Naive thymus-derived CD8-positive, alpha-beta T cell (primary cell): ENCODE measurements at regions of chr12 and their contacts with region 1.

Region 1: GRCh38 chr12:53391729-53392128 is 11.8 kb downstream of the SP1 start:
- DNase-seq: no peak
- ATAC-seq: no peak
- H3K4me3 Mint-ChIP-seq: peak overlapping the region in 8 of 10 donors; percentile 11 to 65 (median 36)
- H3K27ac Mint-ChIP-seq: peak overlapping the region in 6 of 10 donors; percentile 14 to 82 (median 19)
- H3K4me1 Mint-ChIP-seq: peaks cover 17 to 55% (median 48%) of the 10 kb centered on the region in 4 donors
- H3K27me3 Mint-ChIP-seq: no peaks in the 10 kb centered on the region

Region 2: DNA sequence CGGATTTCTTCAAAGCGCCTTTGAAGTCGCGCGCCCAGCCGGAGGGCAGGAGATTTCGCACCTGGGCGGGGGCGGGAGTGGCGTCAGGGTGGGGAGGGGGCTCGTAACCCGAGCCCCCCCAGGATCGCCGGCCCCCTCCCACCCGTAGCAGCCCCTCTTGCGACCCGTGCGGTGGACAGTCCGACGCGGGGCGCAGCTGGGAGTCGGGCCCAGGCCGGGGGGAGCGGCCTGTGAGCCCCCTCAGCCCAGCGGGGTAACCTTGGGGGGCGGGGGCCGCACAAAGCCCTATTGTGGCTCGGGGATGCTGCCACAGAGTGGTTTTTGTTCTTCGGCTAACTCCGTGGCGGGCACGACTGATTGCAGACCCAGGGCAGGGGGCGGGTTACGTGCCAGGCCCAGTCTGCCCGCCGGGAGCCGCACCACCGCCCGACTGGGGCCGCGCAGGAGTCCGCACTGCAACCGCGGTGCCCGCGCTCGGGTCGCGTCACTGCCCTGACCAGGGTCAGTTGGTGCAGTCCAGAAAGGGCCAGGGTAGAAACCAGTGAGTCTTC is 66.1 kb before region 1 on chr12:
- POLR2A ChIA-PET with region 1: no interaction called
- DNase-seq: peak in 4 of 10 donors; percentile 15 to 33 (median 26)
- ATAC-seq: no peak
- H3K4me3 Mint-ChIP-seq: peak overlapping the region; percentile 80 to 99 (median 87)
- H3K27ac Mint-ChIP-seq: peak overlapping the region in 5 of 10 donors; percentile 56 to 96 (median 66)
- H3K4me1 Mint-ChIP-seq: peaks cover 27 to 39% (median 32%) of the 10 kb centered on the region in 4 donors
- H3K27me3 Mint-ChIP-seq: peaks cover 0 to 2% (median 0%) of the 10 kb centered on the region in 5 donors

Region 3: DNA sequence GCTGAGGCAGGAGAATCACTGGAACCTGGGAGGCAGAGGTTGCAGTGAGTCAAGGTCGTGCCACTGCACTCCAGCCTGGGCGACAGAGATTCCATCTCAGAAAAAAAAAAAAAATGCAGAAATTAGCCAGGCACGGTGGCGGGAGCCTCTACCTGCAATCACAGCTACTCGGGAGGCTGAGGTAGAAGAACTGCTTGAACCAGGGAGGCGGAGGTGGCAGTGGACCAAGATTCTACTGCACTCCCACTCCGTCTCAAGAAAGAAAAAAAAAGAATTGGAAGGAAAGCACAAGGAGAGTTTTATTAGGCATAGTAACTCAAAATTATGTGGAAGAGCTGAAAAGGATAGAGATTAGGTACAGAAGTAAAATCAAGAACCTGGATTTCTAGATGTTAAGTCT is 11.1 kb after region 1 on chr12:
- POLR2A ChIA-PET with region 1: interaction called, 10 read pairs
- DNase-seq: no peak
- ATAC-seq: no peak
- H3K4me3 Mint-ChIP-seq: no peak overlapping the region
- H3K27ac Mint-ChIP-seq: peak overlapping the region in 1 of 10 donors; percentile 44
- H3K4me1 Mint-ChIP-seq: peaks cover 0 to 20% (median 8%) of the 10 kb centered on the region in 4 donors
- H3K27me3 Mint-ChIP-seq: no peaks in the 10 kb centered on the region

Region 4: GRCh38 chr12:53431187-53431586 is 39.5 kb after region 1 on chr12:
- POLR2A ChIA-PET with region 1: no interaction called
- DNase-seq: no peak
- ATAC-seq: no peak
- H3K4me3 Mint-ChIP-seq: no peak overlapping the region
- H3K27ac Mint-ChIP-seq: no peak overlapping the region
- H3K4me1 Mint-ChIP-seq: peaks cover 0 to 3% (median 0%) of the 10 kb centered on the region in 4 donors
- H3K27me3 Mint-ChIP-seq: no peaks in the 10 kb centered on the region